Natural killer cell (primary cell): ENCODE measurements at regions of chrX and their contacts with region 1.

Region 1: DNA sequence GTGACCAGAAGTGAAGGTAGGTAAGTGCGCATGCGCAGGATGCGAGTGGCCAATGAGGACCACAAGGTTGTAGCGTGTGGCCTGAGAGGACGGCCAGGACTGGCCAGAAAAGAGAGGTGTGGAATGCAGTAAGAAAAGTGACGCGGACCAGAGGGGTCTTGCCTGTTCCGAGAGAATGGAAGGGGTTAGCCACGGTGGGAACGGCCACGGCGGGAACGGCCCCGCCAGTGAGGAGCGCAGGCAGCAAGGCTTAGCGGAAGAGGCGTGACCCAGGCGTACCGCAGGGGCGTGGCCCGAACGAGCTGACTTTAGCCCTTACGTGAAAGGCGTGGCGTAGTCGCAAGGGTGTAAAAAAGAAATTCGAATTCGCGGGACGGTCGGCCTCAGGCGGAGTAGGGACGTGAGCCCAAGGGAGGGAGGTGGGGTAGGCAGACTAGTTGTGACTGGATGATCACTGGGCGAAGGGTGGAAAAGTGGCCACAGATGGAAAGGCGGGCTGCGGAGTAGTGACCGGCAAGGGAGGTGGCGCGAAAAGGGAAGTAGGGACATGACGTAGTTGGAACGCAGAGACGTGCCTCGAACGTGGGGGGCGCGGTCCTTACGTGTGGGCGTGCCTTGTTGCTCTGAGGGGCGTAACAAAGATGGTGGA is 10.4 kb upstream of the CLTRN start:
- DNase-seq: peak; percentile 79 to 93
- ATAC-seq: peak; percentile 82 to 94 (median 85)
- H3K4me3 ChIP-seq: peak overlapping the region; percentile 91
- H3K4me3 Mint-ChIP-seq: no peak overlapping the region
- H3K27ac ChIP-seq: peak overlapping the region; percentile 100
- H3K27ac Mint-ChIP-seq: no peak overlapping the region
- H3K4me1 ChIP-seq: peaks cover 21% of the 10 kb centered on the region
- H3K4me1 Mint-ChIP-seq: peaks cover 3 to 5% of the 10 kb centered on the region in 2 donors
- H3K27me3 ChIP-seq: no peaks in the 10 kb centered on the region
- H3K27me3 Mint-ChIP-seq: peaks cover 0 to 16% of the 10 kb centered on the region in 2 donors
- CTCF ChIP-seq: no peak

Region 2: DNA sequence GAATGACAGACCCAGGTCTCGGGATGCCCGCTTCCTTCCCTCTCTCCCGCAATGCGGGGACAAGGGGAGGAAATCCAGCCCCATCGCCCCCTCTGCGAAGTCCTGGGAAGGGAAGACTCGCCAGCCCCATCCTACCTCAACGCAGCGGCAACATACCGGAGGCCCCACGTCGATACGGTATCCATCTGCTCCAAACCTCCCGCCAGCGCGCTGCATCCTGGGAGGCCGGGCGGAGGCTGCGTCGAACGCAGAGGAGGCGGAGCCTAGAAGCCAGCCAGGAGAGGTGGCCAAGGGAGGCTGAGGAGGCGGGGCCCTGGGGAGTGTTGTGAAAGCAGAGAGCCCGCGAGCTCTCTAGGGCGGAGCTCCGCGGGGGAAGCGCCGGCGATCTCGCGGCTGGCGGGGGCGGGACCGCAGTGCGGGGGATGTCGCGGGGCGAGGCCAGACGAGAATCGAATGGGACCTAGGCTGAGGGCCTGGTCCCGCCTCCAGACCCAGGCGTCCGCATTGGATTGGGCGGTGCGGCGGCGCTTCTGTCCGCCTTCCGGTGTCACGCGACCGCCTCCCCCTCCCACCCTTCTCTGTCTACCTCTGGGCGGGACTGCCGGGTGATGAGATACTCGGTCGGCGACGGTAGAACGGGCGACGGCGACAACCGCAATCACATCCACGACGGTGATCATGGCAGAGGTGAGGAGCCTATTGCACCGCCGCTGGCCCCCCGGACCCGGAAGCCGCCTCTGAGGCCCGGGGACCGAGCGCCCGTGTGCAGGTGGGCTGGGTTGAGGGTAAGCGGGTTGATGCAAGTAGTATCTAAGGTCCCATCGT is 801.9 kb before region 1 on chrX and contains the starts of genes FANCB and MOSPD2:
- intact Hi-C with region 1: loop called (anchors 10 kb)
- DNase-seq: peak; percentile 88 to 95
- ATAC-seq: peak; percentile 88 to 98 (median 89)
- H3K4me3 ChIP-seq: peak within 1 kb of the TSS; percentile 76
- H3K4me3 Mint-ChIP-seq: peak within 1 kb of the TSS; percentile 92
- H3K27ac ChIP-seq: peak within 1 kb of the TSS; percentile 82
- H3K27ac Mint-ChIP-seq: peak within 1 kb of the TSS; percentile 90 to 91
- H3K4me1 ChIP-seq: peaks cover 6% of the 10 kb centered on the region
- H3K4me1 Mint-ChIP-seq: peaks cover 4 to 8% of the 10 kb centered on the region in 2 donors
- H3K27me3 ChIP-seq: no peaks in the 10 kb centered on the region
- H3K27me3 Mint-ChIP-seq: no peaks in the 10 kb centered on the region
- CTCF ChIP-seq: no peak
- total RNA-seq, gene FANCB: 6.0 to 9.3 (median 7.8) TPM
- total RNA-seq, gene MOSPD2: 10.5 to 18.0 (median 11.2) TPM

Region 3: GRCh38 chrX:15335135-15336022 is 339.6 kb before region 1 on chrX and contains the start of gene PIGA:
- intact Hi-C with region 1: loop called (anchors 10 kb)
- DNase-seq: peak; percentile 84 to 95
- ATAC-seq: peak; percentile 85 to 98 (median 88)
- H3K4me3 ChIP-seq: peak within 1 kb of the TSS; percentile 94
- H3K4me3 Mint-ChIP-seq: peak within 1 kb of the TSS; percentile 89
- H3K27ac ChIP-seq: peak within 1 kb of the TSS; percentile 95
- H3K27ac Mint-ChIP-seq: peak within 1 kb of the TSS; percentile 93
- H3K4me1 ChIP-seq: peaks cover 11% of the 10 kb centered on the region
- H3K4me1 Mint-ChIP-seq: peaks cover 0 to 14% of the 10 kb centered on the region in 2 donors
- H3K27me3 ChIP-seq: peaks cover 3% of the 10 kb centered on the region
- H3K27me3 Mint-ChIP-seq: peaks cover 8 to 34% of the 10 kb centered on the region in 2 donors
- CTCF ChIP-seq: no peak
- total RNA-seq, gene PIGA: 71.8 to 111 (median 87.6) TPM

Region 4: DNA sequence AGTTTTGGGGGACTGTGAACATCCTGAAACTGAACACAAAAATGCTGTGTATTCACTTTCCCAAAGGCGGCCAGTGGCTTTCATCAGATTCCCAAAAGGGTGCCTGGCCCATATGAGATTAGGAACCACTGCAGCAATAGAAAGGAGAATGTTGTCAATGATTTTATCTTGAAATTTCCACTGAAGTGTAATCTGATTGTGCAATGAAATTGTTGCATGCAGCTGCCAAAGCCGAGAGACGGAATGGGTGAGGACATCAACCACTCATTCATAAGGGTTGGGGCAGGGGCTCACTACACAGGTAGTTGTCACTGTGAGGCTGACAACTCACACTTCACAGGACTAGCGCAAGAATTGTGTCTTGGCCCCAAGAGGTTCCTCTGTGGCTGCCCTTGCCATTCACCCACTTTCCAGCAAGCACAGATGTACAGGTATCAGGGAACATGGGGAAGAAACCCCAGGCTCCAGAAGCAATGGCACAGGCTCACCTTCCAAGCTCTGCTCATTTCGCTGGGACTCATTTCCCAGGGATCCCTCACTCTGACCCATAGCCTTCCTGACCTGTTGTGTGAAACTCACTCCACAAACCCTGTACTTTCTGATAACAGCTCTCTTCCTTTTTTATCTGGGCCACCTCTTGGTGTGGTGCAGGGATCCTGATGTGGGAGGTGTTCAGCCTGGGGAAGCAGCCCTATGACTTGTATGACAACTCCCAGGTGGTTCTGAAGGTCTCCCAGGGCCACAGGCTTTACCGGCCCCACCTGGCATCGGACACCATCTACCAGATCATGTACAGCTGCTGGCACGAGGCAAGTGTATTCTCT is 125.6 kb before region 1 on chrX:
- intact Hi-C with region 1: no loop called
- DNase-seq: no peak
- ATAC-seq: no peak
- H3K4me3 ChIP-seq: no peak overlapping the region
- H3K4me3 Mint-ChIP-seq: no peak overlapping the region
- H3K27ac ChIP-seq: no peak overlapping the region
- H3K27ac Mint-ChIP-seq: no peak overlapping the region
- H3K4me1 ChIP-seq: no peaks in the 10 kb centered on the region
- H3K4me1 Mint-ChIP-seq: no peaks in the 10 kb centered on the region
- H3K27me3 ChIP-seq: no peaks in the 10 kb centered on the region
- H3K27me3 Mint-ChIP-seq: peaks cover 2 to 16% of the 10 kb centered on the region in 2 donors
- CTCF ChIP-seq: no peak

Region 5: GRCh38 chrX:15606136-15606535 is 68.8 kb before region 1 on chrX:
- intact Hi-C with region 1: no loop called
- DNase-seq: no peak
- ATAC-seq: no peak
- H3K4me3 ChIP-seq: no peak overlapping the region
- H3K4me3 Mint-ChIP-seq: no peak overlapping the region
- H3K27ac ChIP-seq: no peak overlapping the region
- H3K27ac Mint-ChIP-seq: no peak overlapping the region
- H3K4me1 ChIP-seq: no peaks in the 10 kb centered on the region
- H3K4me1 Mint-ChIP-seq: no peaks in the 10 kb centered on the region
- H3K27me3 ChIP-seq: no peaks in the 10 kb centered on the region
- H3K27me3 Mint-ChIP-seq: peaks cover 3 to 53% of the 10 kb centered on the region in 2 donors
- CTCF ChIP-seq: no peak

Region 6: DNA sequence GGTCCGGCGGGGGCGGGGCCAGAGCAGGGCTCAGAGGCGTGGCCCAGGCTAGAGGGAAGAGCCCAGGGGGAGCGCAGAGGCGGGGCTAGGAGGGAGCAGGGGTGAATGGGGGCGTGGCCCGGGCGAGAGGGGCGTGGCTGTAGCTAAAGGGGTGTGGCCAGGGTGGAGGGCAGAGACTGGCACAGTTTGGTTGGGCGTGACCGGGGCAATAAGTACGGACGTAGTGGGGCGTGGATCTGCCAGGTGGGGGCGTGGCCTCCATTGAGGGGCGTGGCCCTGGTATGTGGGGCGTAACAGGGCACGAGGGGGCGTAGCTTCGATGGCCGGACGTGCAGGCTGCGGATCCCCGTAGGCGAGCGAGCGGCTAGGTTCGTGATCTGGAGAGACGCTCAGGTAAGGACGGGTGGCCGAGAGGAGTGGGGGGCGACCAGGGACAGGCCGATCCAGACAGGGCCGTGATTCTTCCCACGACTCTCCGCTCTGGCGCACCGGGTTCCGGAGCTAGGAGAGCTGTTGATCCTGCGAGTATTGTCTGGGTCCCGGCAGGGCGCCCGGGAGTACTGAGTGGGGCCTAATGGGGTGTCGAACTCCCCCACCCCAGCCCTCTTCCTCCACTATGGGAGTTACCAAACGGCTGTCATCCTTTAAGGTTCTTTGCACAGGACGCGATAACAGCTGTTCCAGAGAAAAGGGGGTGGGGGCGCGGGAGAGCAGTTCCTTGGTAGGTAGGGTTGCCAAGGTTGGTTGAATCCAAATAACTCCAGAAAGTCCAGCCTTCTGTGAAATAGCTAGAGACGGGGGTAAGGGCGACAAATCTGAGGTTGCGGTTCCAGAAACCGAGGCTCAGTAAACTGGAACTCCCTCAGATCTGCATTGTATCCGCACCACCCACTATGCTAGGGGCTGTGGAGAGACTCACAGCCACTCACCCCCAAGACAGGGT is 63.3 kb after region 1 on chrX and contains the start of gene CA5B:
- intact Hi-C with region 1: loop called (anchors 1 kb)
- DNase-seq: peak; percentile 96 to 97
- ATAC-seq: peak; percentile 92 to 99 (median 92)
- H3K4me3 ChIP-seq: peak within 1 kb of the TSS; percentile 69
- H3K4me3 Mint-ChIP-seq: peak within 1 kb of the TSS; percentile 95
- H3K27ac ChIP-seq: peak within 1 kb of the TSS; percentile 85
- H3K27ac Mint-ChIP-seq: peak within 1 kb of the TSS; percentile 87 to 93
- H3K4me1 ChIP-seq: peaks cover 20% of the 10 kb centered on the region
- H3K4me1 Mint-ChIP-seq: peaks cover 54 to 57% of the 10 kb centered on the region in 2 donors
- H3K27me3 ChIP-seq: no peaks in the 10 kb centered on the region
- H3K27me3 Mint-ChIP-seq: no peaks in the 10 kb centered on the region
- CTCF ChIP-seq: no peak
- total RNA-seq, gene CA5B: 56.3 to 111 (median 80.5) TPM

Region 7: GRCh38 chrX:15749642-15750610 is 75.0 kb after region 1 on chrX:
- intact Hi-C with region 1: loop called (anchors 1 kb)
- DNase-seq: peak in 1 of 2 donors; percentile 62
- ATAC-seq: peak; percentile 32 to 71 (median 32)
- H3K4me3 ChIP-seq: no peak overlapping the region
- H3K4me3 Mint-ChIP-seq: peak overlapping the region; percentile 92
- H3K27ac ChIP-seq: peak overlapping the region; percentile 100
- H3K27ac Mint-ChIP-seq: peak overlapping the region; percentile 94 to 96
- H3K4me1 ChIP-seq: peaks cover 51% of the 10 kb centered on the region
- H3K4me1 Mint-ChIP-seq: peaks cover 73 to 89% of the 10 kb centered on the region in 2 donors
- H3K27me3 ChIP-seq: no peaks in the 10 kb centered on the region
- H3K27me3 Mint-ChIP-seq: no peaks in the 10 kb centered on the region
- CTCF ChIP-seq: no peak

Region 8: DNA sequence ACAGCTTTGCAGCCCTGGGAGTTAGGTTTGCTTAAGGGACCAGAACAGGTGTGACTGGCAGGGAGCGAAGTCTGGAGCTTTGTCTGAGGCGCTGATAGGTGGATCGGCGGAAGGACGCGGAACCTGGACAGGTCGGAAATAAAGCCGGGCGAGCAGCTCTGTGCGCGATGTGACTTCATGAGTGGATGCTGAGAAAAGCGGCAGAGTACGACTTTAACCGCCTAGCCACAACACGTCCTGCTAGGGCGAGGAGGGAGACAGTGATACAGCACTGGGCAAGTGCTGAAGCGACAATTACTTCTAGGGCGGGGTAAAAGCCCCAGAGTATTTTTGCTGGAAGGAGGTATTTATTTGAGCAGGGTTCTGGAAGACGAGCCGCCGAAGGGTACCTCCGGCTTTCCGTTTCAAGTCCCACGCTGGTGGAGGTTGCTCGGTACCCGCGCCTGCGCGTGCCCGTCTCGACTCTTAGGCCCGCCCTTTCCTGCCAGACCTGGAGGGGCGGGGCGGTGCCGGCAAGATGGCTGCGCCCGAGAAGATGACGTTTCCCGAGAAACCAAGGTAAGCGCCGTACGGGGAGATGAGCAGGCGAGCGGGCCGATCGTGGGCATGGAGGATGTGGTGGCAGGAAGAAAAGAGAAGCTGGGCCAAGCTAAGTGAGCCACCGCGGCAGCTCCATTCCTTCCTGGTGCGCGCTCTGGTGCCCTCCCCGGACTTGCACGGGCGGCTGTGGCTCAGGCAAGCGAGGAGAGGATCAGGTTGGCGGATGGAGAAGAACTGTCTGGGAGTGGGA is 115.2 kb after region 1 on chrX and contains the start of gene ZRSR2:
- intact Hi-C with region 1: loop called (anchors 1 kb)
- DNase-seq: peak; percentile 78 to 92
- ATAC-seq: peak; percentile 92 to 97 (median 92)
- H3K4me3 ChIP-seq: peak within 1 kb of the TSS; percentile 59
- H3K4me3 Mint-ChIP-seq: no peak within 1 kb of the TSS
- H3K27ac ChIP-seq: peak within 1 kb of the TSS; percentile 84
- H3K27ac Mint-ChIP-seq: no peak within 1 kb of the TSS
- H3K4me1 ChIP-seq: peaks cover 21% of the 10 kb centered on the region
- H3K4me1 Mint-ChIP-seq: peaks cover 16 to 17% of the 10 kb centered on the region in 2 donors
- H3K27me3 ChIP-seq: no peaks in the 10 kb centered on the region
- H3K27me3 Mint-ChIP-seq: no peaks in the 10 kb centered on the region
- CTCF ChIP-seq: no peak
- total RNA-seq, gene ZRSR2: 21.7 to 44.2 (median 28.2) TPM

Region 9: GRCh38 chrX:15815779-15816437 is 140.9 kb after region 1 on chrX:
- intact Hi-C with region 1: no loop called
- DNase-seq: peak in 1 of 2 donors; percentile 63
- ATAC-seq: peak; percentile 56 to 66 (median 65)
- H3K4me3 ChIP-seq: no peak overlapping the region
- H3K4me3 Mint-ChIP-seq: peak overlapping the region; percentile 35
- H3K27ac ChIP-seq: no peak overlapping the region
- H3K27ac Mint-ChIP-seq: peak overlapping the region; percentile 40 to 57
- H3K4me1 ChIP-seq: peaks cover 19% of the 10 kb centered on the region
- H3K4me1 Mint-ChIP-seq: peaks cover 22 to 27% of the 10 kb centered on the region in 2 donors
- H3K27me3 ChIP-seq: no peaks in the 10 kb centered on the region
- H3K27me3 Mint-ChIP-seq: no peaks in the 10 kb centered on the region
- CTCF ChIP-seq: no peak

Region 10: GRCh38 chrX:15854712-15855567 is 180.0 kb after region 1 on chrX and contains the start of gene AP1S2:
- intact Hi-C with region 1: loop called (anchors 2 kb)
- DNase-seq: peak; percentile 92 to 95
- ATAC-seq: peak; percentile 94 to 99 (median 95)
- H3K4me3 ChIP-seq: peak within 1 kb of the TSS; percentile 77
- H3K4me3 Mint-ChIP-seq: peak within 1 kb of the TSS; percentile 96
- H3K27ac ChIP-seq: peak within 1 kb of the TSS; percentile 94
- H3K27ac Mint-ChIP-seq: peak within 1 kb of the TSS; percentile 94 to 96
- H3K4me1 ChIP-seq: peaks cover 4% of the 10 kb centered on the region
- H3K4me1 Mint-ChIP-seq: peaks cover 9 to 12% of the 10 kb centered on the region in 2 donors
- H3K27me3 ChIP-seq: no peaks in the 10 kb centered on the region
- H3K27me3 Mint-ChIP-seq: peaks cover 0 to 15% of the 10 kb centered on the region in 2 donors
- CTCF ChIP-seq: no peak
- total RNA-seq, gene AP1S2: 21.0 to 30.8 (median 25.9) TPM